Right ventricle myocardium inferior (tissue), 1 donor: ENCODE measurements at regions of chr7 and their contacts with region 1.

Region 1: DNA sequence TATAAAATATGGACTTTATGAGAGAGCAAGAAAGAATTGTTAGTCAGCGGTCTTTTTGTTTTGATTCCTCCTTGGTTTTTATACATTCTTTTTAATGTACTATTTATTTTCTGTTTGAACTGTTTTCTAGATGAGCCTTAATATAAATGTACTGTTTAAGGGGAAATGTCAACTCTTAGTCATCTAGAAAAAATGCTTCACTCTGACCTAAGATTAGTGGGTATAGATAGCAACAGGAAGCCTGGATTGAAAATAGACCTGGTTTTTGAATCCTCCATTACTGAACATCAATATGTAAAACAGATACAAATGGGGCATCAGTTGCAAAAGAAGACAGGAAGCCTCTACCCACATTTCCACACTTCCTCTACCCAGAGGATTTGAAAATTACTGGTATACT is 87.8 kb downstream of the CHRM2 start:
- DNase-seq: no peak
- ATAC-seq: no peak

Region 2: GRCh38 chr7:136993377-136993776 is 37.1 kb after region 1 on chr7:
- intact Hi-C with region 1: loop called (anchors 5 kb)
- DNase-seq: no peak
- ATAC-seq: peak; percentile 64

Region 3: DNA sequence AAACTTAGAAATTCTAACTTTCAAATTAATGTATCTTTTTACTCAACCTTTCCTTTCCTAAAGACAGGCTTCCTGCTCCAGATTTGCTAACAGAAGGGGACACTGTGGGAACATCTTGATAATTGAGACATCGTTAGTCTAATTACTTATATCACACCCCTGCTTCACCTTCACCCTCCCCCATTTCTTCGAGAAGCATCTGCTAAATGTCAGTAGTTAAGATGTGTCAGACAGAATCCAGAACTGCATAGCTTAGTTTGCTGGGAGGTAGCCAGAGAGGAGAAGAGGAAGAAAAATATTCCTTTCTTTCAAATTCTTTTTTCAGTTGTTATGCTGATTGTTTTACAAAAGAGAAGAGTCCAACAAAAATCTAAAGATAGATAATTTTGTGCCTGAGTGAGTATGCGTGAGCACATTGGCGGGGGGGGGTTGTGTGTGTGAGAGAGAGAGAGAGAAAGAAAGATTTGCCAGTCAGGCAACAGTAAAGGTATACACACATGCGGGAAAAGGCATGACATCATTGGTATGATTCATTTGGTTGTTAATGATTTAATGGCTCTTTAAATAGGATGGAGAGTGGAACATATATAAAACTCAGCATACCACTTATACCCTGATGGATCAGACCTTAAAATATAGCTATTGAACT is 194.9 kb after region 1 on chr7:
- intact Hi-C with region 1: loop called (anchors 10 kb)
- DNase-seq: peak; percentile 32
- ATAC-seq: peak; percentile 37